Prostate gland (tissue), 2 donors: ENCODE measurements at regions of chr19 and their contacts with region 1.

Region 1: DNA sequence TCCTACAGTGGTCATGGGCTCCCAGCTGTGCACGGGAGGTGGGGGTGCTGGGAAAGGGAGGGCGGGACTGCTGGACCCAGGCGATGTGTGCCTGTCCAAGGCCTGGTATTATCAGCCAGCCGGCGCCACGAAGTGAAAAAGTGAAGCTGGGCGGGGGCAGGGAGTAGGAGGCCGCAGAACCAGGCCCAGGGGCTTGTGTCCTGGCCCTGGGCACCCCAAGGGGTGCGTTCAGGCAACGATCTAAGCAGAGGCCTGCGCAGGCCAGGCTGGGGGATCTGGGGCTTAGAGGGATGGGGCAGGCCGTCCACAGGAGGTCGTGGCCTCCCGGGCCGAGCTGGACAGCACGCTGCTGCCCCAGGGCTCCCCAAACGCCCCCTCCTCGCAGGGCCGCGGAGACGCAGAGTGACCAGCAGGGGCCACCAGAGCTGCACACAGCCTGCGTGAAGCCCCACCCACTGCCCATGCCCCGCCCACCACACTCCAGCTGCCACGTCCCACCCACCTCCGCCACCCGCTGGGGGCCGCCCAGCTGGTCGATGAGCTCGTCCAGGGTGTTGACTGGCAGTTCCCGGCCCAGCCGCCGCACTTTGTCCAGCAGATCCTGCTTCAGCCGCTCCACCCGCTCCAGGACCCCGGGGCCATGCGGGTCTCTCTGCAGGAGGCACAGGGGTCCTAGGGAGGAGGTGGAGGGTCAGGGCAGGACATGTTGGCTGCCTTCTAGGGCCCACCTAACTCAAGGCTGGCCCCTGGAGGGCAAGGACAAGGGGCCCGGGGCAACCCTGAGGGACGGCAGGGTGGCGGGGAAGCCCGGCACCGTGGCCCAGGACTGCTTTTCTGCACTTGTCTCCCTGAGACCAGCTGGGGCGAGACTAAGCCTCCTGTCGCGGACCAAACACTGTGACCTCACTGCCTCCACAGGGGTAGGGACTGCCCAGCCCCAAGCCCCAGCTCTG is 9.5 kb downstream of the GPX4 start:
- DNase-seq: peak; percentile 95
- H3K4me3 ChIP-seq: no peak overlapping the region
- H3K27ac ChIP-seq: peak overlapping the region; percentile 87
- H3K4me1 ChIP-seq: peaks cover 13% of the 10 kb centered on the region
- H3K27me3 ChIP-seq: no peaks in the 10 kb centered on the region
- CTCF ChIP-seq: peak; percentile 90 to 98 (median 96)
- POLR2A ChIP-seq: peak; percentile 48

Region 2: DNA sequence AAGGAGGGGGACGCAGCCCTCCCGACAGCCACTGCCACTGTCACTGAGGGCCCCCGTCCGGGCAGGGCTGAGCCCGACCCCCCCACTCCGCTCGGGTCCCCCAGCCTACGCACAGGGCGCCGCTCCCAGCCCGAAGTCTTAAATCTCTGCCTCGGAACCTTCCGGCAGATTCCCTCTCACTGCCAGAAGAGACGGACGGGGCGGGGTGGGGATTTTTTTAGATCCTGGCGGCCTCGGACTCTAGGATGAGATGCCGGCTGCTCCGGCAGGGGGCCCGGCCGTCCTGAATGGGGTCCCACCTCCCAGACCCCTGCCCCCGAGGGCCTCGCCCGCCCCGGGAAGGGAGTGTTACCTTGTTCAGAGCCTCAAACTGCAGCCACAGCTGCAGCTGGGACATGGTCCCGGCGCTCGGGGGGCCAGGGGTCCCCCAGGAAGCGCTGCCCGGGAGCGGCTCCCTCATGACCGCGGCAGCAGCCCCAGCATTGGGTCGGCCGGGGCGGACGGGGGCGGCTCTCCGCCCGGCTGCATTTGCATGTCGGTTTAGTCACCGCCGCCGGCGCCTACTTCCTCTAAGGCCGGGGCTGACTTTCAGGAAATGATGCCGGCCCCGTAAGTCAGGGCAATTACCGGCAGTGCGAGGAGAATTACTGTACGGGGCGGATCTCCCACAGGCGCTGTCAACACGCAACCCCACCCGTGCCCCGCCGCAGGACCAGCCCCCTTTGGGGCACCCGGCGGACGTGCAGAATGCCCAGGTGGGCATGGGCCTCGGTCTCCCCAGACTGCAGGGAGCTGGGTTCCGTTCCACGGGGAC is 18.6 kb after region 1 on chr19:
- intact Hi-C with region 1: no loop called
- DNase-seq: peak; percentile 83
- H3K4me3 ChIP-seq: peak overlapping the region; percentile 39 to 54
- H3K27ac ChIP-seq: peak overlapping the region; percentile 83 to 89
- H3K4me1 ChIP-seq: peaks cover 29% of the 10 kb centered on the region
- H3K27me3 ChIP-seq: no peaks in the 10 kb centered on the region
- CTCF ChIP-seq: peak in 2 of 4 experiments; percentile 5 to 12
- POLR2A ChIP-seq: peak; percentile 82

Region 3: DNA sequence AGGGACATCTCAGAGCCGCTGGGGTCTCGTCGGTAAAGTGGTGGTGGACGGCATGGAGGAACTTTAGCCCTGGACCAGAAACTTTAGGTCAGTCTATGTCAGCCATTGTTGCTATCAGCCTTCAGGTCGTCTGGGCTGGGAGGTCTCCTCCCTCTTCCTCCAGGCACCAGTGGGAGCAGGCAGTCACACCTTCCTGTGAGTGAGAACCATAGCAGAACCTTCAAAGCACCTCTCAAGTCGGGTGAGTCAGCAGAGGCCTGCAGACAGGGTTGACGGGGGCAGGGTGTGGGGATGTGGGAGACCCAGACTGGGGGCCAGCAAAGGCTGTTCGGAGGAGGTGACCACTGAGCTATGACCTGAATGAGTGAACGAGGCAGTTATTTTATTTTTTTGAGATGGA is 76.1 kb after region 1 on chr19:
- intact Hi-C with region 1: loop called (anchors 5 kb)
- DNase-seq: no peak
- H3K4me3 ChIP-seq: no peak overlapping the region
- H3K27ac ChIP-seq: no peak overlapping the region
- H3K4me1 ChIP-seq: no peaks in the 10 kb centered on the region
- H3K27me3 ChIP-seq: no peaks in the 10 kb centered on the region
- CTCF ChIP-seq: no peak
- POLR2A ChIP-seq: no peak